ENCODE measurements at regions of chr5 and their contacts with region 1.

Region 1: GRCh38 chr5:115246361-115246991 is 16.2 kb downstream of the PGGT1B start:
- DNase-seq: peak; percentile 71
- ATAC-seq: peak; percentile 66
- H3K4me3 ChIP-seq: no peak overlapping the region
- H3K27ac ChIP-seq: no peak overlapping the region
- H3K4me1 ChIP-seq: peaks cover 20% of the 10 kb centered on the region
- H3K27me3 ChIP-seq: no peaks in the 10 kb centered on the region
- CTCF ChIP-seq: peak; percentile 86

Region 2: GRCh38 chr5:113612060-113612496 is 1634.4 kb before region 1 on chr5:
- CTCF ChIA-PET with region 1: no interaction called
- POLR2A ChIA-PET with region 1: no interaction called
- intact Hi-C with region 1: loop called (anchors 2 kb)
- DNase-seq: peak; percentile 46
- ATAC-seq: peak; percentile 69
- H3K4me3 ChIP-seq: no peak overlapping the region
- H3K27ac ChIP-seq: no peak overlapping the region
- H3K4me1 ChIP-seq: peaks cover 6% of the 10 kb centered on the region
- H3K27me3 ChIP-seq: no peaks in the 10 kb centered on the region; the same call in 1 of the 2 replicates
- CTCF ChIP-seq: peak; percentile 79

Region 3: DNA sequence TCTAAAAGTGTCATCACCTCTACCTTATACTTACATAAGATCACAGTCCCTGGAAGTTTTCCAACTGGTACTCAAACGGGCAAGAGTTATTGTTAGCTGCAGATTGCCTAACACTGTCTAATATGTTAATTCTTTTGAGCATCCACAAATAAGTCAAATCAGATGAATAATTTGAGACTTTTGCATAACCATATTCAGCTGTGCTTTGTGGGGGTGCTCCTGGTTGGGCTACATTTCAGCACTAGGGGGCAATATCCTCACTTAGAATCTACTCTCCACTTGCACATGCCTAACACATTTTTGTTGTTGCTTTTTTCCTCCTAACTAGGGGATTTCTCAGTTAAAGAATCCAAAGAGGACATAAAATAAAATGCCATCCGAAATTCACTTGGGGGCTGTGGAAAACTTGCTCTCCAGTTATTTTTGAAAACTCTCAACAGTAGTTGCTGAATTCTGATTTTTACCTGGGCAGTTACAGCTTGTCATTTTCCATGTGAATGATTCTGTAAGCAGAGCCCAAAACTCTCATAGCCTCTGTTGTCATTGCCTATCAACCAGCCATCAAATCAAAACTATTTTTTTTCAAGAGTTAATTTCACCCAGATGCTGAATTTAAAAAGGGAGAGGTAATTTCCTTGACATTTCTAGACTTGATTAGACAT is 148.3 kb before region 1 on chr5:
- CTCF ChIA-PET with region 1: interaction called, 6 read pairs
- POLR2A ChIA-PET with region 1: no interaction called
- intact Hi-C with region 1: loop called (anchors 1 kb)
- DNase-seq: peak; percentile 68
- ATAC-seq: peak; percentile 94
- H3K4me3 ChIP-seq: no peak overlapping the region
- H3K27ac ChIP-seq: no peak overlapping the region
- H3K4me1 ChIP-seq: no peaks in the 10 kb centered on the region
- H3K27me3 ChIP-seq: peaks cover 25% of the 10 kb centered on the region
- CTCF ChIP-seq: peak; percentile 91

Region 4: DNA sequence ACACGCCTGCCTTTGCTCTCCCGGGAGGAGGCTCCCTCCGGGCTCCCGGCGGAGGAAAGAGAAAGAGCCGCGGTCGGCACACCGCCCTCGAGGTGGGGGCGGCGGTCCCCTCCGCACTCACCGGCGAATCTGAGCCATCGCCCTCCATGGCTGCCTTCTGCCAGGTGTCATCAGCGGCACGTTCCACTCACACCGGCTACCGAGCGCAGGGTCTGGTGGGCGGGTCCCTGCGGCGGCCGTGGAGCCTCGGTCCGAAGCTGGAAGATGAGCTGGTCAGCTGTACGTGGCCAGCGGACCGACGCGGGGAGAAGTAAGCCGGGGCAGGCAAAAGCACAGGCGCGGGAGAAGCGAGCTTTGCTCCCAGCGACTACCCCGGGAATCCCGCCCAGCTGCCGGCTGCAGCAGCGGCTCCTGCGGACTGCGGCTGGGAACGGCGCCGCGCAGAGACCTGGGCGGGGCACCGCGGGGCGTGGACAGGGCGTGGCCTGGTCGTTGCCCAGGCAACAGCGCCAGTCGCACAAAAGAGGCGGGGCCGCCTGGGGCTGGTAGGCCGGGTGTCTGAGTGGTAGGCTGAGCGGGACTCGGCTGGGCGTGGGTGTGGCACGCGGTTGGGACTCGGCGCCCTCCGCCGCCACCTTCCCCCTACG is 76.9 kb before region 1 on chr5 and contains the start of gene TRIM36:
- CTCF ChIA-PET with region 1: interaction called, 3 read pairs
- POLR2A ChIA-PET with region 1: no interaction called
- intact Hi-C with region 1: loop called (anchors 5 kb)
- DNase-seq: peak; percentile 95
- ATAC-seq: peak; percentile 95
- H3K4me3 ChIP-seq: peak within 1 kb of the TSS; percentile 86
- H3K27ac ChIP-seq: no peak within 1 kb of the TSS
- H3K4me1 ChIP-seq: peaks cover 10% of the 10 kb centered on the region
- H3K27me3 ChIP-seq: peaks cover 60% of the 10 kb centered on the region
- CTCF ChIP-seq: 0 out of 2 replicates have a peak, but pooled peaks have one; percentile 13
- total RNA-seq, gene TRIM36: 0.15 TPM in 1 of 2 replicates, not detected in the other